AG04449 (cell line): ENCODE measurements at regions of chr2 and their contacts with region 1.

Region 1: GRCh38 chr2:219029829-219030165 is 11.5 kb downstream of the CFAP65 start:
- DNase-seq: peak; percentile 2
- H3K4me3 ChIP-seq: no peak overlapping the region
- CTCF ChIP-seq: peak; percentile 94

Region 2: GRCh38 chr2:218979846-218980734 is 49.7 kb before region 1 on chr2:
- CTCF ChIA-PET with region 1: interaction called, 22 read pairs
- POLR2A ChIA-PET with region 1: no interaction called
- DNase-seq: no peak
- H3K4me3 ChIP-seq: peak overlapping the region; percentile 45
- CTCF ChIP-seq: peak; percentile 93

Region 3: GRCh38 chr2:218995972-218996711 is 33.7 kb before region 1 on chr2:
- CTCF ChIA-PET with region 1: interaction called, 13 read pairs
- POLR2A ChIA-PET with region 1: no interaction called
- DNase-seq: no peak
- H3K4me3 ChIP-seq: peak overlapping the region; percentile 50
- CTCF ChIP-seq: peak; percentile 90

Region 4: GRCh38 chr2:219041252-219041651 is 11.5 kb after region 1 on chr2 and contains the start of gene CFAP65:
- CTCF ChIA-PET with region 1: interaction called, 104 read pairs
- POLR2A ChIA-PET with region 1: no interaction called
- DNase-seq: no peak
- H3K4me3 ChIP-seq: peak within 1 kb of the TSS; percentile 56
- CTCF ChIP-seq: no peak

Region 5: DNA sequence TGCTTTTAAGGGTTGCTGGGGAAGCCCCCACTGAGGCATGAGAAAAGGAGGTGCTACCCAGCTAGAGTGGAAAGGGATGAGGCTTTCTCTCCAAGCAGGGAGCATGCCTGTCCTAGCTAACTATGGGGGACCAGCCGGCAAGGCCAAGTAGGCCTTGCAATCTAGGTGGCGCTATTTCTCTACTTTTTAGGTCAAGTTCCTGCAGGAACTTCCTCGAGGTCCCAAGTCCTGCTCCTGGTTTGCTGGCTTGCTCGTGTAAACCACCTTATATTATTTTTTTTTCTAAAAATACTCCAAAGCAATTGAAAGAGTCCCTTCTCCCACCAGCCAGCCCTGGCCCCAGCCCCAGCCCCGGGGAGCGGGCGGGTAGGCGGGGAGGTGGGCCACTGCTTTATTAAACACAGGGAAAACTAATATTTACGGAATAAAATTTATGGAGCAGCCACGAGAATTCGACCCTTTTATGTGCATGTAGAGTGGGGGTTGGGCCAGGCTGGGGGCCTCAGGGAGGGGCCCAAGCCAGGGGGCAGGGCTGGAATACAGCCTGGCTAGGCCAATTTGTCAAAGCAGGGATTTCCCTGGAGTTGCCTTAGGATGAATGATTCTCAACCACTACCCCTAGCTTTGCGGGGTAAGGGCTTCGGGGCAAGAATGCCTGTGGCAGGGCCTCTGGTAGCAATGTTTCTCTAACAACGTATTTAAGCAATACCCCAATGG is 43.8 kb after region 1 on chr2:
- CTCF ChIA-PET with region 1: interaction called, 18 read pairs
- POLR2A ChIA-PET with region 1: no interaction called
- DNase-seq: peak; percentile 16
- H3K4me3 ChIP-seq: no peak overlapping the region
- CTCF ChIP-seq: peak; percentile 52

Region 6: GRCh38 chr2:219133976-219134375 is 104.2 kb after region 1 on chr2:
- CTCF ChIA-PET with region 1: interaction called, 28 read pairs
- POLR2A ChIA-PET with region 1: no interaction called
- DNase-seq: no peak
- H3K4me3 ChIP-seq: no peak overlapping the region
- CTCF ChIP-seq: no peak